A549 (cell line): ENCODE measurements at regions of chr1 and their contacts with region 1.

Region 1: DNA sequence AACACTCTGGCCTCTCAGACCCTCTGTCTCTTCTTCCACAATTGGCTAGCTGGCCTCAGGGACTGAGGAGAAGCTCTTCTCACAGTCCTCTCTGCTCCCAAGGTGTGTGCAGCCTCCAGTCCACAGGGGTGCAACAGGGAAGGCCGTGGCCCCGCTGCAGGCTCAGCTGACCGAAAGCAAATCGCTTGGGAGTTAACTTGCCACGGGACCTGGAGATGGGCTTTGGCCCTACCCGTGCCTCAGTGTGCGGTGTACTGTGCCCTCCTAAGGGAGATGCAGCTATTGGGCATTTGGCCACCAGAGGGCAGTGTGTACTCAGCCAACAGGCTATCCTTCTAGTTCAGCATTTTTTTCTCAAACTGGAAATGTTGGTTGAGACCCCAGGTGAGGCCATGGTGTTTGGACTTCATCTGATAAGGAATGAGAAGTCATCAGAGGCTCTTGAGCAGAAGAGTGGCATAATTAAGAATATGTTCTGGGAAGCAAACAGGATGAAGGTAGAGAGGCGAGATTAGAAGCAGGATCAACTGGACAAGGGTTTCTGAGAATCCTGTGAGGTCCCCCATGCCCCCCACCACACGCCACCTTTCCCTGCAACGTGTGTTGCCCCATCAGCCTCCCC is 42.5 kb upstream of the TMEM125 start:
- DNase-seq: peak; percentile 55 to 61
- ATAC-seq: peak; percentile 88 to 98
- H3K4me3 ChIP-seq: no peak overlapping the region
- H3K27ac ChIP-seq: peak overlapping the region in 1 of 2 experiments; percentile 64; a peak in 2 of 6 replicates
- H3K4me1 ChIP-seq: peaks cover 5% of the 10 kb centered on the region; the same call in 1 of the 3 replicates
- CTCF ChIP-seq: peak; percentile 85
- EP300 ChIP-seq: no peak
- POLR2A ChIP-seq: no peak
- RAD21 ChIP-seq: peak; percentile 91 to 93

Region 2: DNA sequence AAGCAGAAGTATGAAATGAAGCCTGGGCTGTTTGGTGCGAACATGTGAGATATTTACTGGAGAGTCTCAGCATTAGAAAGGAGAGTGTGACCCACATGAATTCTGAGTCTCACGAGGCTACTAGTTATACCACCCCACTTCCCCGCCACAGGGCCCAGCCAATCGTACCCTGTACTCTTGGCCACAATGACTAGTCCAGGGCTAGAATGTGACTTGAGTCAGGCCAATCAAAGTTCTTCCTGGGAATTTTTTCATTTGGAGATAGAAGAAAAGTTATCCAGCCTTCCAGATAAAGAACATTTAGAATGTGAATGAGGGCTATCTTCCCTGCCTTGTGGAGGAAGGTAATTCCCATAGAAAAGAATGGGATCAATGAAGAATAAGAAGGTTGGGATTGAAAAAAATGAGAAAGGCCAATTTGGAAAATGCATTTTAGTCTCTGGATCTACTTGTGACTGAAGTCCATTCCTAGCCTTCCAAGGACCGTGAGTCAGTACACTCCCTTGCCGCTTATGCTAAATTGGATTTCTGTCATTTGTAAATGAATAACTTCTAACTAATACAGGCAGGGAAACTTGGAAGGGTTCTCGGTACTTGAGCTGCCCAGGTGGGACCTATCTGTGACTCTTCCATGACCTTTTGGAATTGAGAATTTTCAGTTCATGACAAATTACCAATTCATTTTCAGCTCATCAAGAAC is 859.0 kb before region 1 on chr1:
- CTCF ChIA-PET with region 1: no interaction called
- POLR2A ChIA-PET with region 1: no interaction called
- DNase-seq: peak in 1 of 2 experiments; percentile 37
- ATAC-seq: peak; percentile 43 to 54; a peak in 3 of 6 replicates
- H3K4me3 ChIP-seq: no peak overlapping the region
- H3K27ac ChIP-seq: no peak overlapping the region
- H3K4me1 ChIP-seq: peaks cover 12% of the 10 kb centered on the region
- CTCF ChIP-seq: no peak
- EP300 ChIP-seq: no peak
- POLR2A ChIP-seq: no peak
- RAD21 ChIP-seq: no peak

Region 3: DNA sequence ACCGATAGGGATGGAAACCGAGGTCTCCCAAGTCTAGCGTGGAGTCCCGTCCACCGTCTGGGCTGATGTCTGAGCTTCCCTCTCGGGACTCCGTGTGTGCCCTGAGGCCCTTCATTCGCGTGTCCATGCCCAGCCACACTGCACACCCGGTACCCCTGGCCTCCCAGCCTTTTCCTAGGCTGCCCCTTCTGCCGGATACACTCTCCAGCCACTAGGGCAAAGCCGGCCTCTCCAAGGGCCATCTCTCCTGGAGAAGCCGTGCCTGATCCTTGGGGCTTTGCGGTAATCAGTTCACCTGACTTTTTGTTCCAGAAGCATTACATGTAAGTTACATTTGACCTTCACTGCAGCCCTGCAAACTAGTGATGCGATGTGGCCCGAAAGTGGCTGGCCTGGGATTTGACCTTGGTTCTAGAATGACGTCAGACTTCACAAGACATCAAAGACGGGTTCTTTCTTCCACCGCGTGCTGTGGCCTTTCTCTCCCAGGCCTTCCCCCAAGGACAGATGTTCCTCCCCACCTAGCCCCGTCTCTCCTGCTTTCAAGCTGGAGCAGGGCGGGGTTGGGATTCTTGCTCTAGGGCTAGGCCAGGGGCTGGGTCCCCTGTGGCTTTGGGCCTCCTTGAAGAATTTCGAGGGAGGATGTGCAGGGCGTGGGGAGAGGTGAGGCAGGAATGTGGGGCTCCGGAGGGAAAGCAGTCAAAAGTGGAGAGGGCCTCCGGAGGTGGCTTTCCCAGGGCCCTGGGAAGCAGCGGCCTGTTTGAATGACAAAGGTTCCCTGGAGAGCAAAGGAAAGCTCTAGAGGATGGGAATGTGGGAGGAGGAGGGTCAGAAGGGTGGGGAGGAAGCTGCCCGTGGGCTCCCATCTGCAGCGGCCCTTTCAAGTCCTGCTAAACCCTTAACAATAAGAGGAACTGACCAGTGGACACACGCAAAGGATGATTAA is 218.9 kb before region 1 on chr1:
- CTCF ChIA-PET with region 1: no interaction called
- POLR2A ChIA-PET with region 1: no interaction called
- DNase-seq: peak in 1 of 2 experiments; percentile 11
- ATAC-seq: no peak; a peak in 1 of 6 replicates
- H3K4me3 ChIP-seq: no peak overlapping the region
- H3K27ac ChIP-seq: no peak overlapping the region
- H3K4me1 ChIP-seq: no peaks in the 10 kb centered on the region
- CTCF ChIP-seq: no peak
- EP300 ChIP-seq: no peak
- POLR2A ChIP-seq: no peak
- RAD21 ChIP-seq: no peak

Region 4: GRCh38 chr1:43214501-43215444 is 12.5 kb before region 1 on chr1:
- CTCF ChIA-PET with region 1: interaction called, 21 read pairs
- POLR2A ChIA-PET with region 1: no interaction called
- DNase-seq: no peak
- ATAC-seq: no peak
- H3K4me3 ChIP-seq: no peak overlapping the region
- H3K27ac ChIP-seq: no peak overlapping the region
- H3K4me1 ChIP-seq: no peaks in the 10 kb centered on the region
- CTCF ChIP-seq: no peak
- EP300 ChIP-seq: no peak
- POLR2A ChIP-seq: no peak
- RAD21 ChIP-seq: no peak

Region 5: DNA sequence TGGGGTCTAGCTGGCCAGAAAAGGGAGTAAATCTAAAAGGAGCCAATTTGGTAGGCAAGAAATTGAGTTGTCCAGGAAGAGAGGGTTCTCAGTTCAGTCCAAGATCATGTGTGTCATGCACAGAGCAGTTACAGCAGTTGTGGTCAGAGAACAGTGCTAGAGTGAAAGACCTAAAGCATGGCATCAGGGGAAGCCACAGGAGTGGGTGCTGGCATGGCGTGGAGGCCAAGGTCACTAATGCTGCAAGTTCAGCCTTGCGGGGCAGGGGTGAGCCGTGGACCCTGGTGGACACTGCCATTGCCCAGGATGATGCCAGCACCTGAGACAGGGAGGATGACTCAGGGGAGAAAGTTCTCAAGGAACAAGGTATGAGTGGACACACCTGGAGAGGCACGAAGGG is 25.9 kb after region 1 on chr1:
- CTCF ChIA-PET with region 1: no interaction called
- POLR2A ChIA-PET with region 1: no interaction called
- DNase-seq: no peak
- ATAC-seq: no peak
- H3K4me3 ChIP-seq: no peak overlapping the region
- H3K27ac ChIP-seq: no peak overlapping the region
- H3K4me1 ChIP-seq: no peaks in the 10 kb centered on the region
- CTCF ChIP-seq: no peak
- EP300 ChIP-seq: no peak
- POLR2A ChIP-seq: no peak
- RAD21 ChIP-seq: no peak

Region 6: DNA sequence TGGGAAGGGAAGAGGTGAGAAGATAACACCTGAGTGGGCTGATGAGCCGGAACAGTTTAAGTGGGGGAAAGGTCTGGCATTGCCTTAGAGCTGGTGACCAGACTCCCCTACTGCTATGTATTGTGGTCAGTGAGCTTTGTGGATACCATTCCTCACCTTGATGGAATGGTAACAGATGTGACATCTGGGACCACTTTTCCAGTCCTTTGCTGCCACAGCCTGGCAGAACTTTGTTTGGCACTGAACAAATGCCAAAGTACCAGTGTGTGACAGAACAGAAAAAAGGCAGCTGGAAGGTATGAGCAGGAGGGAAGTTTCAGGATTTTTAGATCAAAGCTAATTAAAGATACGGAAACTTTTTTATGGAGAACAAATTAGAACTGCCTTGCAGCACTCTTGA is 156.2 kb after region 1 on chr1:
- CTCF ChIA-PET with region 1: interaction called, 16 read pairs
- POLR2A ChIA-PET with region 1: no interaction called
- DNase-seq: no peak
- ATAC-seq: peak; percentile 42 to 51; a peak in 2 of 6 replicates
- H3K4me3 ChIP-seq: no peak overlapping the region
- H3K27ac ChIP-seq: no peak overlapping the region
- H3K4me1 ChIP-seq: peaks cover 9% of the 10 kb centered on the region; the same call in 2 of the 3 replicates
- CTCF ChIP-seq: peak; percentile 17; the same call in 1 of the 3 replicates
- EP300 ChIP-seq: no peak
- POLR2A ChIP-seq: no peak
- RAD21 ChIP-seq: peak; percentile 52 to 54; a peak in 4 of 5 replicates

Region 7: DNA sequence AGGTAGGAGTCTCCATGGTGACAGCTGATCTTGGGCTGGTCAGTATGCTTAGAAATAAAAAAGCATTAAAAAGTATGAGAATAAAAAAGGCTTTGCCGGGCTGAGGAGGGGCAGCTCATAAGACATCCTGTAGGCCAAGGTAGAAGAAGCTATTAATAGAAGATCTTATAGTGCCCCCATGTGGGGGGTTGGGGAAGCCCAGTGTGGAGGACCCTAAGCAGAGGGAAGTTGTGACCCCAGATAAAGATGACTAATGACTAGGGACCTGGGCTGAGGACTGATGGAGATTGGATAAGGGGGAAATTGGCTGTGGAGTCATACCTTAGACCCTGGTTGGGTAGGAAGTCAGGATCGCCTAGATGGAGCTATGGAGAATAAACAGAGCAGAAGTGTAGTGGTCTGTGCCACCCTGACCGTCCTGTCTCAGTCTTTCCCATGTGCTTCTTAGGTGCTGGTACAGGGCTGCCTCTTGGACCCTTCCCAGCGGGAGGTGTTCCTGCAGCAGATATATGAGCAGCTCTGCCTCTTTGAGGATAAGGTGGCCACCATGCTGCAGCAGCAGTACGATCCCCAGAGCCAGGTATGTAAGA is 187.5 kb after region 1 on chr1:
- CTCF ChIA-PET with region 1: interaction called, 21 read pairs
- POLR2A ChIA-PET with region 1: interaction called, 3 read pairs
- DNase-seq: peak; percentile 32 to 56
- ATAC-seq: peak; percentile 93 to 97
- H3K4me3 ChIP-seq: no peak overlapping the region
- H3K27ac ChIP-seq: no peak overlapping the region
- H3K4me1 ChIP-seq: no peaks in the 10 kb centered on the region
- CTCF ChIP-seq: peak; percentile 51
- EP300 ChIP-seq: no peak
- POLR2A ChIP-seq: no peak
- RAD21 ChIP-seq: peak; percentile 64

Region 8: GRCh38 chr1:43934101-43934985 is 707.1 kb after region 1 on chr1:
- CTCF ChIA-PET with region 1: interaction called, 10 read pairs
- POLR2A ChIA-PET with region 1: no interaction called
- DNase-seq: peak; percentile 51 to 60
- ATAC-seq: peak; percentile 32 to 76; a peak in 4 of 6 replicates
- H3K4me3 ChIP-seq: no peak overlapping the region
- H3K27ac ChIP-seq: peak overlapping the region in 1 of 2 experiments; percentile 92; a peak in 4 of 6 replicates
- H3K4me1 ChIP-seq: peaks cover 54% of the 10 kb centered on the region
- CTCF ChIP-seq: peak; percentile 63
- EP300 ChIP-seq: no peak
- POLR2A ChIP-seq: no peak
- RAD21 ChIP-seq: peak; percentile 74 to 81